Aorta (tissue), 5 donors: ENCODE measurements at regions of chr9 and their contacts with region 1.

Region 1: GRCh38 chr9:118929287-118929686 is 439.9 kb downstream of the BRINP1 start:
- DNase-seq: no peak
- ATAC-seq: no peak
- H3K4me3 ChIP-seq: no peak overlapping the region
- H3K27ac ChIP-seq: no peak overlapping the region
- H3K4me1 ChIP-seq: peaks cover 4 to 6% of the 10 kb centered on the region in 2 donors
- H3K27me3 ChIP-seq: no peaks in the 10 kb centered on the region

Region 2: DNA sequence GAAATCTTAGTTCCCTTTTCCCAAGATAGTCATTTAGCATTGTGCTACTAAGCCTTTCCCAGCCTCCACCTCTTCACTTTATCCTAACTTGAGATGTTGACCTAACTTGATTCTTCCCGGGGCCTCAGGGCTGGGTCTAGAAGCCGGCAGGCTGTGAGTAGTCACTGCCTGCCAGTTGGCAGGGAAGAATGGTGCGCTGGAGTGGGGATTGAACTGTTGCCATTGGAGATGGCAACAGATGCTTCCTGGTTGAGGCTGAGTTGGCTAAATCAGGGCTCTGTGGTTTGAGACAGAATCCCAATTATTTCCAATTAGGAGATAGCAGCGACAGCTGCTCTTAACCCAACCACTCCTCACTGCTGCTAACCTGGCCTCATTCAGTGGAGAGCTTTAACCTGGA is 96.8 kb after region 1 on chr9:
- intact Hi-C with region 1: loop called in 1 of 2 experiments (anchors 2 kb)
- DNase-seq: peak; percentile 80
- ATAC-seq: peak; percentile 88
- H3K4me3 ChIP-seq: no peak overlapping the region
- H3K27ac ChIP-seq: peak overlapping the region; percentile 92 to 98
- H3K4me1 ChIP-seq: peaks cover 0 to 6% of the 10 kb centered on the region in 2 donors
- H3K27me3 ChIP-seq: no peaks in the 10 kb centered on the region